ENCODE measurements at regions of chr12 and their contacts with region 1.

Region 1: GRCh38 chr12:27142101-27142721 is 59.8 kb upstream of the C12orf71 start:
- DNase-seq: peak in 1 of 2 donors; percentile 80
- ATAC-seq: peak; percentile 76 to 95 (median 94)
- H3K4me3 ChIP-seq: no peak overlapping the region
- H3K27ac ChIP-seq: peak overlapping the region in 1 of 10 donors; percentile 41
- H3K4me1 ChIP-seq: peaks cover 0 to 24% (median 8%) of the 10 kb centered on the region in 9 donors
- H3K27me3 ChIP-seq: no peaks in the 10 kb centered on the region
- CTCF ChIP-seq: peak; percentile 59 to 93 (median 82)

Region 2: GRCh38 chr12:27014085-27014858 is 127.9 kb before region 1 on chr12 and contains the start of gene TM7SF3:
- intact Hi-C with region 1: loop called in 1 of 10 experiments (anchors 5 kb)
- DNase-seq: peak; percentile 94
- ATAC-seq: peak; percentile 93 to 99 (median 96)
- H3K4me3 ChIP-seq: peak within 1 kb of the TSS; percentile 60 to 98 (median 79)
- H3K27ac ChIP-seq: peak within 1 kb of the TSS; percentile 73 to 95 (median 92)
- H3K4me1 ChIP-seq: peaks cover 0 to 54% (median 39%) of the 10 kb centered on the region in 9 donors
- H3K27me3 ChIP-seq: no peaks in the 10 kb centered on the region
- CTCF ChIP-seq: peak; percentile 92 to 99 (median 98)
- total RNA-seq, gene TM7SF3: 16.3 to 29.3 (median 23.7) TPM

Region 3: GRCh38 chr12:27024291-27024690 is 117.9 kb before region 1 on chr12:
- intact Hi-C with region 1: loop called in 2 of 10 experiments (anchors 5 kb)
- DNase-seq: no peak
- ATAC-seq: no peak
- H3K4me3 ChIP-seq: peak overlapping the region in 2 of 10 donors; percentile 62 to 79
- H3K27ac ChIP-seq: no peak overlapping the region
- H3K4me1 ChIP-seq: peaks cover 6 to 34% (median 18%) of the 10 kb centered on the region in 9 donors
- H3K27me3 ChIP-seq: no peaks in the 10 kb centered on the region
- CTCF ChIP-seq: no peak

Region 4: DNA sequence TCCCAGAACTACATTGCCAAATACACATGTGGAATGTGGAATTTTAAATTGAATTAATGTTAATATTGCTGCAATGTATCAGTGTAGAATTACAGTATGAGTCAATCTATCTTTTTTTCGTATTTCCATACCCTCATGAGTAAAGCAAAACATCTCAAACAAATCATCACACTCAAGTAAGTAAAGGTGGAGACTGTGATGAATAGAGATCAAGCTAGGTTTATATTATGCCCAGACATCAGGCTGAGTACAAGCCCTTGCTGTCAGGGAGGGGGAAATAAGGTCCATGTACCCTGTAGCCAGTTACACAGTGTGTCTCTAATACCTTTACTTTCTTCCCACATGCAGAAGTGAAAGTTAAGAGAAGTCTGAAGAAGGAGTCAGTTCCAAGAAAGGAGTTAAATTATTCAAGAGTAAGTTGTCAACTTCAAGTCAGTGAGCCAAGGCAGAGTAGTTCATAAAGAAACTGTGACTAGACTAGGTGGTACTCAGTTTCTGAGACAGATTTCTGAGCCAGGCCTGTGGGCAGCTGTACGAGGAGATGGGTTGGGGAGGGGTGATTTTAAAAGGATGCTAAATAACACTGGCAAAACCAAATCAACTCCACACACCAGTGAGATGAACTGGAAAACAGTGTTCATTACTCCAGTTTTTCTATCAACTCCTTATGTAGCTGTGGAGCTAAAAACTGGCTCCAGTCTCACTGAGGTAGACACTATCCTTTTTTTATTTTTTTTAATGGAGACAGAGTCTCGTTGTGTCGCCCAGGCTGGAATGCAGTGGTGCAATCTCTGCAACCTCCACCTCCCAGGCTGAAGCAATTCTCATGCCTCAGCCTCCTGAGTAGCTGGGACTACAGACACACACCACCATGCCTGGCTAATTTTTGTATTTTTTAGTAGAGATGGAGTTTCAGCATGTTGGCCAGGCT is 78.1 kb after region 1 on chr12:
- intact Hi-C with region 1: loop called in 1 of 10 experiments (anchors 10 kb)
- DNase-seq: no peak
- ATAC-seq: no peak
- H3K4me3 ChIP-seq: no peak overlapping the region
- H3K27ac ChIP-seq: no peak overlapping the region
- H3K4me1 ChIP-seq: peaks cover 0 to 24% (median 0%) of the 10 kb centered on the region in 9 donors
- H3K27me3 ChIP-seq: no peaks in the 10 kb centered on the region
- CTCF ChIP-seq: no peak

Region 5: GRCh38 chr12:27237790-27238771 is 95.9 kb after region 1 on chr12:
- intact Hi-C with region 1: loop called in 2 of 10 experiments (anchors 5 to 10 kb)
- DNase-seq: no peak
- ATAC-seq: peak in 5 of 8 donors; percentile 49 to 75 (median 58)
- H3K4me3 ChIP-seq: no peak overlapping the region
- H3K27ac ChIP-seq: peak overlapping the region in 1 of 10 donors; percentile 70
- H3K4me1 ChIP-seq: peaks cover 0 to 30% (median 0%) of the 10 kb centered on the region in 9 donors
- H3K27me3 ChIP-seq: no peaks in the 10 kb centered on the region
- CTCF ChIP-seq: no peak

Region 6: GRCh38 chr12:27293463-27293862 is 151.3 kb after region 1 on chr12:
- intact Hi-C with region 1: loop called in 2 of 10 experiments (anchors 5 kb)
- DNase-seq: peak in 1 of 2 donors; percentile 42
- ATAC-seq: peak in 4 of 8 donors; percentile 30 to 71 (median 68)
- H3K4me3 ChIP-seq: no peak overlapping the region
- H3K27ac ChIP-seq: peak overlapping the region in 8 of 10 donors; percentile 11 to 87 (median 66)
- H3K4me1 ChIP-seq: peaks cover 0 to 100% (median 85%) of the 10 kb centered on the region in 9 donors
- H3K27me3 ChIP-seq: no peaks in the 10 kb centered on the region
- CTCF ChIP-seq: no peak

Region 7: DNA sequence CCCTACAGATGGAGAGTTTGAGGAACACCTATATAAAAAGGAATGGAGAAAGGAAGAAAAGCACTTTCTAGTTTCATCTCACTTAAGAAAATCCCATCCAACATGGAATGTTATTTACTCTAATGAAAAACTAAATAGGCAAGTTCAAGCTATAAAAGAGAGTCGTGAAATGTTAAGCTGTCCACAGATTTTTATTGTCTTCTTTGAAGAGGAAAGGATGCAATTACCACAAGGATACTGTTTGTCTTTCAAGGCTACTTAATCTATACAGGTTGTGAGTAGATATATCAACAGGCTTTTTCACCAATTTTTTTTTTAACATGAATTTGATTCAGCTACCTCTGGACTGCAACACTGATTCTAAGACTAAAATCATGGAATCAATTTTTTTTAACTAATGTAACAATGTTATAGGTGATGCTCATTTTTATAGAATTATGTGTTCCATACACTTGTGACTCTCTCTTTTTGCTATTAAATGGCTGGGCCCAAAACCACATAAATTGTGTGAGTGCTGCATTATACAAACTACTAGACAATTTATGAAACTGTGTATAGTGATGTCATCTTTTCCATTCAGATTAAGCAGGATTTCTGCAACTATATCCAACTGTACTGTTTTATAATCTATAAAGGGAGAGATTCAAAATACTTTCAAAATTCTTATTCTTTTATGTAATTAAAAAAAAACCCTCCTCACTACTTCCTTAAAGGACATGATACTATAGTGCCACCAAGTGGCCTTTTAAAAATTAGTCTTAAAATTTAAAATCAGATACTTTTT is 163.7 kb after region 1 on chr12:
- intact Hi-C with region 1: loop called in 6 of 10 experiments (anchors 5 to 10 kb)
- DNase-seq: no peak
- ATAC-seq: peak in 4 of 8 donors; percentile 33 to 67 (median 46)
- H3K4me3 ChIP-seq: no peak overlapping the region
- H3K27ac ChIP-seq: peak overlapping the region in 4 of 10 donors; percentile 16 to 43 (median 34)
- H3K4me1 ChIP-seq: peaks cover 0 to 28% (median 6%) of the 10 kb centered on the region in 9 donors
- H3K27me3 ChIP-seq: no peaks in the 10 kb centered on the region
- CTCF ChIP-seq: peak; percentile 55 to 80 (median 71)

Measured in heart right ventricle (tissue), 16 donors.